Right ventricle myocardium inferior (tissue), 1 donor: ENCODE measurements at regions of chr3 and their contacts with region 1.

Region 1: GRCh38 chr3:168047190-168047795 is 48.4 kb downstream of the GOLIM4 start:
- DNase-seq: no peak
- ATAC-seq: peak; percentile 77

Region 2: DNA sequence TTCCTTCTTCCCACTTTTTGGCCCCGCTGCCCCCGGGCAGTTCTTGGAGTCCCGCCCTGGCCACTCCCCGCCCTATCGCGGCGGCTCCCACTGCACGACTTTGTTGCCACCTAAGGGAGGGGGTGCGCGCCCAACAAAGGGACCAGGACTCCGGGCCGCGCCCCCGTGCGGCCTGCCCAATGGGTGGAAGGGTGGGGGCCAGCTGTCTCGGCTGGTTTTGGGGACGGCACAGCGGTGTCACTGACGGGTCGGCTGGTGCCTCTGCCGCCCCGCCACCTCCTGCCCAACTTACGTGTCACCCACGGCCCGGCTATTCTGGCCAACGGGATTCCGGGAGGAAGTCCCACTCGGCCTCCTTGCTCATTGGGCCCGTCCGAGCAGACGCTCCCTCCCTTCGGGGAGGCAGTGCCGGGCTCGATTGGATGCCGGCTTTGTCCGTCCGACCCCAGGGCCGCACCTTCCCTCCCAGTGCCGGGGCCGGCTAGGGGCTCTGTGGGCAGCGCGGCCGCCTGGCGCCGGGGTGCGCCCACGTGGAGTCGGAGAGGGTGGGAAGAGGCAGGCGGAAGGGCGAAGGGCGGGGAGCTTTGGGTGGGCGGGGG is 48.4 kb after region 1 on chr3 and contains the start of gene GOLIM4:
- intact Hi-C with region 1: loop called (anchors 2 kb)
- DNase-seq: peak; percentile 97
- ATAC-seq: peak; percentile 97
- total RNA-seq, gene GOLIM4: 57.3 TPM

Region 3: GRCh38 chr3:169432708-169433420 is 1385.6 kb after region 1 on chr3:
- intact Hi-C with region 1: no loop called
- DNase-seq: no peak
- ATAC-seq: no peak